CD4-positive, alpha-beta T cell (primary cell): ENCODE measurements at regions of chr2 and their contacts with region 1.

Region 1: DNA sequence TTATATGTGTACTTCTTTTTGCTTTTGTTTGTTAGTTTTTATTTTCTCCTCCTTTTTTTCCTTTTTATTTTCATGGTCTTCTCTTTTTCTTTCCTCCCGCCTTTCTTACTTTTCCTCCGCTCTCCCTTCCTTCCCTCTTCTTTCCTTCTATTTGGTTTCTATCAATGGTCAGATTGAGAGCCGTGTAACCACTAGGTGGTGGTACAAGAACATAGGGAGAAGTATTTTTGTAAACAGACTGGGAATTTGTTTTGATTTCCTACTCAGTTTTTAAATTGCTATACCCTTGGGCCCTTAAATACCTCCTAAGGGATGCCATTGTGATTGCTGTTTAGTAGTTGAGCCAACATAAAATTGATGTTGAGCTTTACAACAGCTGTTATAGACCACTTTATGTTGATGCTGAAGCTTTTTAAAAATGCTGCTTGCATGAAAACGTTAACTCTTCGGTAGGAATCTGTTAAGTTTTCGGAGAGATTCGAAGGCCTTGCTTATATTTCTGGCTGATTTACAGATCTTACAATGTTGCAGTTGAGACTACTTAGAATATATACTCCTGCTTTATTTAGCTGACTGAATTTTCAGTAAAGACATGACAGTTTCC is 124.2 kb downstream of the UBE2E3 start:
- DNase-seq: peak in 4 of 14 experiments; percentile 49 to 79 (median 75)
- ATAC-seq: peak; percentile 49
- H3K4me3 ChIP-seq: no peak overlapping the region
- H3K4me3 Mint-ChIP-seq: no peak overlapping the region
- H3K27ac ChIP-seq: no peak overlapping the region
- H3K27ac Mint-ChIP-seq: no peak overlapping the region
- H3K4me1 ChIP-seq: peaks cover 19% of the 10 kb centered on the region
- H3K4me1 Mint-ChIP-seq: peaks cover 43% of the 10 kb centered on the region
- H3K27me3 ChIP-seq: no peaks in the 10 kb centered on the region
- H3K27me3 Mint-ChIP-seq: no peaks in the 10 kb centered on the region
- CTCF ChIP-seq: peak; percentile 98

Region 2: GRCh38 chr2:180607514-180608049 is 497.0 kb before region 1 on chr2:
- CTCF ChIA-PET with region 1: no interaction called
- POLR2A ChIA-PET with region 1: no interaction called
- intact Hi-C with region 1: no loop called
- DNase-seq: no peak
- ATAC-seq: no peak
- H3K4me3 ChIP-seq: no peak overlapping the region
- H3K4me3 Mint-ChIP-seq: no peak overlapping the region
- H3K27ac ChIP-seq: no peak overlapping the region
- H3K27ac Mint-ChIP-seq: no peak overlapping the region
- H3K4me1 ChIP-seq: no peaks in the 10 kb centered on the region
- H3K4me1 Mint-ChIP-seq: no peaks in the 10 kb centered on the region
- H3K27me3 ChIP-seq: no peaks in the 10 kb centered on the region
- H3K27me3 Mint-ChIP-seq: no peaks in the 10 kb centered on the region
- CTCF ChIP-seq: no peak

Region 3: DNA sequence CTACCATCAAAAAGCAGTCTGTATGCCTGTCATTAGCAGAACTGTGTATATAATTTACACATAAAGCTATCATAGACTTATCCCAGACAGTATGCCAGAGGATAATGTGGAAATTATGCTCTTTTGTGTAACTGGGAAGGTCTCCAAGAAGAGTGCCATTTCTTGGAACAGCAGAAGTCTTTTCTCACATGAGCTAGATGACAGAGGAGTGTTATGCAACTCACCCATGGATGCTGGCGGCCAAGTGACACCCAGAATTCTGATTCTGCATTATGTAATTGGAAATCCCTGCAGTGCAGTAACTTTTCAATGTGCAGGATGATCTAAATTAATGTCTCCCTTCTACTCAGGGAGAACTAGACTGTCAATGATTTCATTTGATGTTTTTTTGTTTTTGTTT is 35.8 kb after region 1 on chr2:
- CTCF ChIA-PET with region 1: interaction called, 5 read pairs
- POLR2A ChIA-PET with region 1: interaction called, 3 read pairs
- intact Hi-C with region 1: loop called in 1 of 2 experiments (anchors 5 kb)
- DNase-seq: peak in 5 of 14 experiments; percentile 12 to 69 (median 58)
- ATAC-seq: peak; percentile 35
- H3K4me3 ChIP-seq: no peak overlapping the region
- H3K4me3 Mint-ChIP-seq: peak overlapping the region; percentile 85
- H3K27ac ChIP-seq: peak overlapping the region; percentile 48 to 81
- H3K27ac Mint-ChIP-seq: peak overlapping the region; percentile 96
- H3K4me1 ChIP-seq: peaks cover 34% of the 10 kb centered on the region
- H3K4me1 Mint-ChIP-seq: peaks cover 80% of the 10 kb centered on the region
- H3K27me3 ChIP-seq: no peaks in the 10 kb centered on the region
- H3K27me3 Mint-ChIP-seq: no peaks in the 10 kb centered on the region
- CTCF ChIP-seq: no peak

Region 4: DNA sequence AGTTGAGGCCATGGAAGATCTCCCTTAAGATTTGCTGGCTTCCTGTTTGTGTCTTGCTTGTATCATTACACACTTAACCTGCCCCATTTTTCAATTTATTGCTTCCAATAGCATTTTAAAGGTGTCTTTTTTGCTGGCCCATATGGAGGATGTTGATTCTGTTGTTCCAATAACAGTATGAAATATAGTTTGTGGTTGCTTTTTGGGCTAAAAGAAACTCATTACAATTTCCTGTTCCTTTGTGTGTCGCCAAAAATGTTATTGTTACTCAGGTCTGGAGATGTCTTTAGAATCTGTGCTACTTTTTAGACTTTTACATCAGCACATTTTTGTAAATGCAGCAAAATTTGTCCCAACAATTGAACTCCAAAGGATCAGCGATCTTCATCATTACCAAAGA is 118.6 kb after region 1 on chr2:
- CTCF ChIA-PET with region 1: no interaction called
- POLR2A ChIA-PET with region 1: no interaction called
- intact Hi-C with region 1: loop called in 1 of 2 experiments (anchors 5 kb)
- DNase-seq: peak in 3 of 14 experiments; percentile 20 to 74 (median 26)
- ATAC-seq: peak; percentile 68
- H3K4me3 ChIP-seq: no peak overlapping the region
- H3K4me3 Mint-ChIP-seq: peak overlapping the region; percentile 49
- H3K27ac ChIP-seq: peak overlapping the region; percentile 36 to 50
- H3K27ac Mint-ChIP-seq: peak overlapping the region; percentile 96
- H3K4me1 ChIP-seq: no peaks in the 10 kb centered on the region
- H3K4me1 Mint-ChIP-seq: peaks cover 51% of the 10 kb centered on the region
- H3K27me3 ChIP-seq: no peaks in the 10 kb centered on the region
- H3K27me3 Mint-ChIP-seq: no peaks in the 10 kb centered on the region
- CTCF ChIP-seq: no peak

Region 5: GRCh38 chr2:181305301-181306123 is 200.9 kb after region 1 on chr2:
- CTCF ChIA-PET with region 1: interaction called, 5 read pairs
- POLR2A ChIA-PET with region 1: interaction called, 7 read pairs
- intact Hi-C with region 1: loop called in 1 of 2 experiments (anchors 5 kb)
- DNase-seq: peak in 13 of 14 experiments; percentile 9 to 81 (median 37)
- ATAC-seq: peak; percentile 77
- H3K4me3 ChIP-seq: no peak overlapping the region
- H3K4me3 Mint-ChIP-seq: peak overlapping the region; percentile 79
- H3K27ac ChIP-seq: peak overlapping the region; percentile 78 to 84
- H3K27ac Mint-ChIP-seq: peak overlapping the region; percentile 95
- H3K4me1 ChIP-seq: peaks cover 34% of the 10 kb centered on the region
- H3K4me1 Mint-ChIP-seq: peaks cover 85% of the 10 kb centered on the region
- H3K27me3 ChIP-seq: no peaks in the 10 kb centered on the region
- H3K27me3 Mint-ChIP-seq: no peaks in the 10 kb centered on the region
- CTCF ChIP-seq: no peak

Region 6: GRCh38 chr2:181466661-181467576 is 362.3 kb after region 1 on chr2:
- CTCF ChIA-PET with region 1: interaction called, 24 read pairs
- POLR2A ChIA-PET with region 1: interaction called, 7 read pairs
- intact Hi-C with region 1: loop called in 1 of 2 experiments (anchors 1 kb)
- DNase-seq: peak; percentile 63 to 89 (median 74)
- ATAC-seq: peak; percentile 65
- H3K4me3 ChIP-seq: no peak overlapping the region
- H3K4me3 Mint-ChIP-seq: peak overlapping the region; percentile 69
- H3K27ac ChIP-seq: peak overlapping the region; percentile 23 to 35
- H3K27ac Mint-ChIP-seq: peak overlapping the region; percentile 84
- H3K4me1 ChIP-seq: peaks cover 33% of the 10 kb centered on the region
- H3K4me1 Mint-ChIP-seq: peaks cover 89% of the 10 kb centered on the region
- H3K27me3 ChIP-seq: no peaks in the 10 kb centered on the region
- H3K27me3 Mint-ChIP-seq: no peaks in the 10 kb centered on the region
- CTCF ChIP-seq: peak; percentile 94

Region 7: GRCh38 chr2:181742922-181743722 is 638.5 kb after region 1 on chr2:
- CTCF ChIA-PET with region 1: no interaction called
- POLR2A ChIA-PET with region 1: no interaction called
- intact Hi-C with region 1: no loop called
- DNase-seq: peak in 6 of 14 experiments; percentile 2 to 61 (median 40)
- ATAC-seq: no peak
- H3K4me3 ChIP-seq: no peak overlapping the region
- H3K4me3 Mint-ChIP-seq: no peak overlapping the region
- H3K27ac ChIP-seq: no peak overlapping the region
- H3K27ac Mint-ChIP-seq: no peak overlapping the region
- H3K4me1 ChIP-seq: no peaks in the 10 kb centered on the region
- H3K4me1 Mint-ChIP-seq: no peaks in the 10 kb centered on the region
- H3K27me3 ChIP-seq: no peaks in the 10 kb centered on the region
- H3K27me3 Mint-ChIP-seq: no peaks in the 10 kb centered on the region
- CTCF ChIP-seq: peak; percentile 72